HEK293 (cell line): ENCODE measurements at regions of chr9 and their contacts with region 1.

Region 1: DNA sequence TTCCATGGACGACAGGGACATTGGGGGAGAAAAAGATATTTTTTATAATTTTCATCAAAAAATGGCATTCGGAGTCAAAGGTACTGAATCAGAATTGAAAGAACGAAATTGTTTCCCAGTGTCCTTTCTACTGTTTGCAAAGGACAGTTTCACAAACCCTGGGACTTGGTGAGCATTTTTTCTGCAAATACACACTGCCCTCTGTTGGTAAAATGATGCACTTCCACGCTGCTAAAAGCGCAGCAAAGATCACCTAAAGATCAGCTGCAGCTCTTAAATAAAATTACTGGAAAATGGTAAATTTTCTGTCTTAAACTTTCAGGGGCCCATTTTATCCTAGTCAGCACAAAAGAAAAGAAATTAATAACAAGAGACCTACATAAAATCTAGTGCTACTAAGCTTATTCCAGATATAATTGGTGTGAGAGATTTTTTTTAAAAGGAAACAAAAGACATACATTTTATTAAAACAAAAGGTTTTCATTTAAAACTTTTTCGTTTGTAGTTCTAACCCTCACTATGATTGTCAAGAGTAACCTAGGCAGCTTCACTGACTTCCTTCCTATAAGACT is 566.0 kb downstream of the CAAP1 start:
- H3K4me3 ChIP-seq: no peak overlapping the region
- H3K27ac ChIP-seq: no peak overlapping the region
- H3K4me1 ChIP-seq: no peaks in the 10 kb centered on the region
- CTCF ChIP-seq: no peak

Region 2: GRCh38 chr9:25964239-25964638 is 362.3 kb before region 1 on chr9:
- CTCF ChIA-PET with region 1: interaction called, 19 read pairs
- POLR2A ChIA-PET with region 1: no interaction called
- H3K4me3 ChIP-seq: no peak overlapping the region
- H3K27ac ChIP-seq: no peak overlapping the region
- H3K4me1 ChIP-seq: no peaks in the 10 kb centered on the region
- CTCF ChIP-seq: no peak